ENCODE measurements at regions of chr4 and their contacts with region 1.

Region 1: GRCh38 chr4:125728568-125728967 is 413.8 kb downstream of the FAT4 start:
- DNase-seq: peak; percentile 88
- ATAC-seq: peak; percentile 97
- H3K4me3 ChIP-seq: no peak overlapping the region
- H3K27ac ChIP-seq: peak overlapping the region; percentile 56
- H3K4me1 ChIP-seq: peaks cover 38% of the 10 kb centered on the region
- H3K27me3 ChIP-seq: no peaks in the 10 kb centered on the region
- CTCF ChIP-seq: no peak

Region 2: GRCh38 chr4:125368671-125369081 is 359.9 kb before region 1 on chr4:
- CTCF ChIA-PET with region 1: no interaction called
- POLR2A ChIA-PET with region 1: no interaction called
- intact Hi-C with region 1: loop called (anchors 5 kb)
- DNase-seq: peak; percentile 66
- ATAC-seq: peak; percentile 88
- H3K4me3 ChIP-seq: peak overlapping the region; percentile 53
- H3K27ac ChIP-seq: peak overlapping the region; percentile 41
- H3K4me1 ChIP-seq: peaks cover 20% of the 10 kb centered on the region
- H3K27me3 ChIP-seq: no peaks in the 10 kb centered on the region
- CTCF ChIP-seq: no peak

Measured in PC-3 (cell line).